Heart left ventricle (tissue), 16 donors: ENCODE measurements at regions of chr11 and their contacts with region 1.

Region 1: GRCh38 chr11:134578807-134579723 is 167.0 kb upstream of the B3GAT1 start:
- DNase-seq: peak in 1 of 5 donors; percentile 0
- ATAC-seq: no peak
- H3K4me3 ChIP-seq: no peak overlapping the region
- H3K27ac ChIP-seq: no peak overlapping the region
- H3K4me1 ChIP-seq: peaks cover 0 to 15% (median under 1%) of the 10 kb centered on the region in 12 donors
- H3K27me3 ChIP-seq: peaks cover 0 to 91% (median 16%) of the 10 kb centered on the region in 9 donors
- CTCF ChIP-seq: no peak
- POLR2A ChIP-seq: no peak

Region 2: DNA sequence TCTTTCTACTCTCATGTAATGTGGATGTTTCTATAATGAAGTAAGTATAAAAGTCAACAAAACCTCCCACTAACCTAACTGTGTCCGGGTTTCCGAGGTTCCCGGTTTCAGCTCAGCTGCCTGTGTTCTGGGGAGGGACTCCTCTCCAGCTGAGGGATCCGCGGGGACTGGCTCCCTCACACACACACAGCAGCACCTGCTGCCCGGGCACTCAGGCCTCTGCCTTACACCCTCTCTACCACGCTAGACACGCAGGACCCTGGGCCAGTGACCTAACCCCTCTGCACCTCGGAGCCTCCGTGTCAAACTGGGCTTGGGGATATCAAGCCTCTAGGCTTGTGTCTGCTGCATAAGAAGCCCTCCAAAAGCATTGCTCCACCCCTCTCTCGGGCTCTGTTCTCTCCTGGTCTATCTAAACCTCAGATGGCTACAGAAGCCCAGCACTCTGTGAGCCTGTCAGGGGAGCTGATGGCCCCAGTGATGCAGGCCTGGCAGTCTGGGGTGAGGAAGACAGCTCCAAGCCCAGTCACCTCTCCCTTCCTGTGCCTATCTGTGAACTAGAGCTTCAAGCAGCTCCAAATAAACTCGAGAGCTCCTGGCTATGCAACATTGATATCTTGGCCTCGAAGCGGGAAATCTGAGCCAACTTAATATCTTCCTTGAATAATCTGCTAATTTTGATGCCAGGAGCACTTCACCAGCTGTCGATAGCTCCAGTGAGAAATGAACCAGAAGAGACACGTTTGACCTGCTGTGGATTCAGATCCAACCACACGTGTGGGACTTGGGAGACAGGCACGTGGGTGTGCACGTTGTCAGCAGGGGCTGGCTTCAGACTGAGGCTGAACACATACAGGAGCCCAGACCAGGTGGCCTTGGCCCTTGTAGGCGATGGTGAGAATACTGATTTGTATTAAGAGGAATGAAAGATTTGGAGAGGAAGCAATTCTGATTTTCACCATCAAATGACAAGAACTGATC is 65.7 kb after region 1 on chr11:
- intact Hi-C with region 1: no loop called
- DNase-seq: no peak
- ATAC-seq: peak in 1 of 4 donors; percentile 47
- H3K4me3 ChIP-seq: no peak overlapping the region
- H3K27ac ChIP-seq: no peak overlapping the region
- H3K4me1 ChIP-seq: no peaks in the 10 kb centered on the region
- H3K27me3 ChIP-seq: peaks cover 0 to 91% (median 29%) of the 10 kb centered on the region in 9 donors
- CTCF ChIP-seq: no peak
- POLR2A ChIP-seq: no peak

Region 3: GRCh38 chr11:134714021-134714656 is 135.1 kb after region 1 on chr11:
- intact Hi-C with region 1: no loop called
- DNase-seq: no peak
- ATAC-seq: no peak
- H3K4me3 ChIP-seq: no peak overlapping the region
- H3K27ac ChIP-seq: no peak overlapping the region
- H3K4me1 ChIP-seq: no peaks in the 10 kb centered on the region
- H3K27me3 ChIP-seq: peaks cover 0 to 48% (median 0%) of the 10 kb centered on the region in 9 donors
- CTCF ChIP-seq: no peak
- POLR2A ChIP-seq: no peak

Region 4: DNA sequence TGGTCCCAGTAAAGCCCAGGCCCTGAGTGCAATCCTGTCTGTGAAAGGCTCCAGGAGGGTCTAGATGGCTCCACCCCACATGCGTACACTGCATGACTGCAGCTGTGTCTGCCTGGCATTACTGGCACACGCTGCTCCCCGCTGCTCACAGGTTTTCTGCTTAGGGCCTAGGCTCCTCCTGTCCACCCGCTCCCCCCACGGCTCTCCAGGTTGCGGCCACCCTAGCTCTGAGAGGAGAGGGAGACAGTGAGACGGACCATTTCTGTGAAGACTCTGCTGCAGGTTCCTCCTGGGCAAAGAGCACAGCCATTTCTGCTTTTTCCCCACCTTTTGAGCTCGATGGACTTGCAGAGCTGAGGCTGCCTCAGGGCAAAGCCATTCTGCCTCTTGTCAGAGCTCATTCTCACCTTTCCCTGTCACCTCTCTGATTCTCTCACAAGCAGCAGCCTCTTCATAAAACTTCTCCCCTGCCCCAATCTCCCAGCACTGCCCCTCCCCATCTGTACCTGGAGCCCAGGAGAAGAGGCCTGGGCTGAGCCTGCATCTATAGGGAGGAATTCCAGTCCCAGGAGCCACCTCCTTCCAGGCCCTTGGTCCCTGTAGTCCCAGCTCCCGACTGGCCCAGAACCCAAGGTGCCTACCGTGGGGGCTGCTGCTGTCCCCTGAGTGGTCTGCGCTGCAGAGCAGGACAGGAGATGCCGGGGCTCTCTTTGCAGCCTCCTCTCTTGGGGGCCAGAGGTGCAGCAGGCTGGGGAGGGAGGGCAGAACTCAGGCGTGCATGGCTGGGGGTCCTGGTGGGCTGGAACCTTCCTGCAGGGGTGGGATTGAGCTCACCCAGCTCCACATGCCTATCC is 266.6 kb after region 1 on chr11:
- intact Hi-C with region 1: loop called in 1 of 10 experiments (anchors 10 kb)
- DNase-seq: no peak
- ATAC-seq: no peak
- H3K4me3 ChIP-seq: no peak overlapping the region
- H3K27ac ChIP-seq: no peak overlapping the region
- H3K4me1 ChIP-seq: no peaks in the 10 kb centered on the region
- H3K27me3 ChIP-seq: peaks cover 0 to 50% (median 6%) of the 10 kb centered on the region in 9 donors
- CTCF ChIP-seq: no peak
- POLR2A ChIP-seq: no peak